ENCODE measurements at regions of chr11 and their contacts with region 1.

Region 1: DNA sequence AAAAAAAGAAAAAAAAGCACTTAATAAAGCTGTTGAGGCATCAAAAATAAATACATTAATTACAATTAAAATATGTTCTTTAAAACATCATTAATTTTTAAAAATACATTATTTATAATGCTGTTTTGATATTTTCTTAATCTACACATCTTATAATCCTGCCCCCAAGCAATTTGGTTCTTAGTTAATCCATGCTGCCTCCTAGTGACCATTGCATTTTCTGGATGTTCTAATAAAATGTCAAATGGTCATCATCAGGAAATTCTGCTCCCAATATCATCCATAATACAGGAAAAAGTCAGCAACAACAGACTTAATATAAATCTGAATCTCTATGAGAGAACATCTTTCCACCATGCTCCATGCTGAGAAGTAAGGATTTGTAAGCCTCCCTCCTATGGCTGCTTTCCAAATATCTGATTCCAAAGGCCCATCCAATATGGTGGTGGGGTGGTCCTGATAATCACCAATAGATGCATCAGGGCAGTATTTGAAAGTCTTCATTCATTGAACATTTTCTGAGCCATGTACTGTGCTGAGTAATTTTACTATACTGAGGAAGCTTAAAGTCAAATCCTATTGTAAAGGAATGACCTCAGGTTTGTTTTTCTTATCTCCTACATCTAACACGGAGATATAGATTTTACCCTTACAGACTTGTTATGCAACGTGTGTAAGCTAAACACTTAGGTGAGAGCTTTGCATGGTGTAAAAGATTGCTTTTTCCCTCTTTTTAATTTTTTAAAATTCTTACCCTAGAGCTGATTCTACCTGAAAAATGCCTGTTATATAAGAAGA is 124.7 kb upstream of the BMAL1 start:
- DNase-seq: peak; percentile 55
- H3K4me3 ChIP-seq: no peak overlapping the region
- H3K27ac ChIP-seq: no peak overlapping the region
- H3K4me1 ChIP-seq: peaks cover 4% of the 10 kb centered on the region
- H3K27me3 ChIP-seq: peaks cover 0 to 6% of the 10 kb centered on the region in 2 experiments
- CTCF ChIP-seq: peak; percentile 28 to 35
- POLR2A ChIP-seq: no peak

Region 2: DNA sequence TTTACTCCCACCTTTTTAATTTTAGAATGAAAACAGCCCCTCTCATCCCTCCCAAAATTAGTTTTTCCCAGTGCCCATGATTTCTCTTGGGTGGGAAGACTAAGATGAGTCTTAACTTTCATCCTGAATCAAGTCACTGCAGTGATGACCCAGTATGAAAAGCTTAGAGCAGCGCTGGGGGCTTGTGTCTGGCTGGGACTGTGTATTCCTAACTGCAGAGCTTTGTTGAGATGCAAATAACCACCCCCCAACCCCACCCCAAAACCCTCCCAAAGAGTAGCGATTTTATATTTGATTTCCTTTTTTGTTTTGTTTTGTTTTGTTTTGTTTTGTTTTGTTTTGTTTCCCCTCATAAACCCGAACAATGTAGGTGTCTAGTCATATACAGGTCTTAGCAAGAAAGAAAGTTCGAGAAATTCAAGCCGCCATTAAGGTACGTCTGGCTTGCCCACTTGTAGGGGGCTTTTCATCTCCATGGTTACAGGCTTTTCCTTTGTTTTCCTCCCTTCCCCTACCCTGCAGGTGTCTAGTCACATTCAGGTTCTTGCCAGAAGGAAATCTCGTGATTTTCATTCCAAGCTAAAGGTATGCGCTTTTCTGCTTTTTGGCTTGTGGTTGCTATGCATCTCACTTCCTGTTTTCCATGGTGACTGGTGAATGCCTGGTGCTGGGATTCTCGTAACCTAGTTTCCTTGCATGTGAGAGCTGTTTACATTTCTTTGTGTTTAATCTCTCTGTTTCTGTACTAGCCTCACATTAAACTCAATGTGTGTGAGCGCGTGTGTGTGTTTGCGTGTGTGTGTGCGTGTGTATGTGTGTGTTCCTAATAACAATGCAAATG is 288.4 kb before region 1 on chr11:
- CTCF ChIA-PET with region 1: no interaction called
- POLR2A ChIA-PET with region 1: no interaction called
- dilution Hi-C with region 1: no loop called
- intact Hi-C with region 1: no loop called
- DNase-seq: peak; percentile 97
- H3K4me3 ChIP-seq: no peak overlapping the region
- H3K27ac ChIP-seq: peak overlapping the region; percentile 32
- H3K4me1 ChIP-seq: peaks cover 7% of the 10 kb centered on the region
- H3K27me3 ChIP-seq: no peaks in the 10 kb centered on the region
- CTCF ChIP-seq: no peak
- POLR2A ChIP-seq: no peak

Region 3: GRCh38 chr11:12942157-12942556 is 210.8 kb before region 1 on chr11:
- CTCF ChIA-PET with region 1: no interaction called
- POLR2A ChIA-PET with region 1: no interaction called
- dilution Hi-C with region 1: no loop called
- intact Hi-C with region 1: no loop called
- DNase-seq: no peak
- H3K4me3 ChIP-seq: no peak overlapping the region
- H3K27ac ChIP-seq: no peak overlapping the region
- H3K4me1 ChIP-seq: no peaks in the 10 kb centered on the region
- H3K27me3 ChIP-seq: no peaks in the 10 kb centered on the region
- CTCF ChIP-seq: no peak
- POLR2A ChIP-seq: no peak

Region 4: DNA sequence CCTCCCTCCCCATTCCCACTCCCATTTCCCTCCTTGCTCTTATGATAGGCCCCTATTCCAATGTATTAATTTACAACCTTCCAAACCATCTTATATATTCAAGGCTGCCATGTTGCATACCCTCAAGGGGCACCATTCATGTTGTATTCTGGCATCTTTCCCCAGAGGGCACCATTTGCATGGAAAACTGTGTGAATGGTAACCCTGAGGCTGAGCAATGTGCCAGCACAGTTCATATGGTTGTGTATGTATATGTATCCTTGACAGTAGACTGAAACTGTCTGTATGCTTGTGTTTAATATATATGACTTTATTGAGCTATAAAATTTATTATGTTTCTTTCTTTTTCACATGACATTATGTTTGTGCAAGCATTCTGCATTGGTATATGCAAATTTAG is 136.5 kb before region 1 on chr11:
- CTCF ChIA-PET with region 1: interaction called, 5 read pairs
- POLR2A ChIA-PET with region 1: no interaction called
- dilution Hi-C with region 1: no loop called
- intact Hi-C with region 1: loop called (anchors 1 kb)
- DNase-seq: peak; percentile 37
- H3K4me3 ChIP-seq: no peak overlapping the region
- H3K27ac ChIP-seq: no peak overlapping the region
- H3K4me1 ChIP-seq: no peaks in the 10 kb centered on the region
- H3K27me3 ChIP-seq: peaks cover 28 to 60% of the 10 kb centered on the region in 2 experiments
- CTCF ChIP-seq: no peak
- POLR2A ChIP-seq: no peak

Region 5: GRCh38 chr11:13105237-13105844 is 47.6 kb before region 1 on chr11:
- CTCF ChIA-PET with region 1: interaction called, 3 read pairs
- POLR2A ChIA-PET with region 1: no interaction called
- dilution Hi-C with region 1: no loop called
- intact Hi-C with region 1: loop called (anchors 2 kb)
- DNase-seq: peak; percentile 99
- H3K4me3 ChIP-seq: peak overlapping the region in 1 of 3 experiments; percentile 0
- H3K27ac ChIP-seq: peak overlapping the region; percentile 60
- H3K4me1 ChIP-seq: peaks cover 39% of the 10 kb centered on the region
- H3K27me3 ChIP-seq: no peaks in the 10 kb centered on the region
- CTCF ChIP-seq: no peak
- POLR2A ChIP-seq: peak; percentile 70

Measured in endothelial cell of umbilical vein (primary cell).